ENCODE measurements at regions of chr6 and their contacts with region 1.

Region 1: DNA sequence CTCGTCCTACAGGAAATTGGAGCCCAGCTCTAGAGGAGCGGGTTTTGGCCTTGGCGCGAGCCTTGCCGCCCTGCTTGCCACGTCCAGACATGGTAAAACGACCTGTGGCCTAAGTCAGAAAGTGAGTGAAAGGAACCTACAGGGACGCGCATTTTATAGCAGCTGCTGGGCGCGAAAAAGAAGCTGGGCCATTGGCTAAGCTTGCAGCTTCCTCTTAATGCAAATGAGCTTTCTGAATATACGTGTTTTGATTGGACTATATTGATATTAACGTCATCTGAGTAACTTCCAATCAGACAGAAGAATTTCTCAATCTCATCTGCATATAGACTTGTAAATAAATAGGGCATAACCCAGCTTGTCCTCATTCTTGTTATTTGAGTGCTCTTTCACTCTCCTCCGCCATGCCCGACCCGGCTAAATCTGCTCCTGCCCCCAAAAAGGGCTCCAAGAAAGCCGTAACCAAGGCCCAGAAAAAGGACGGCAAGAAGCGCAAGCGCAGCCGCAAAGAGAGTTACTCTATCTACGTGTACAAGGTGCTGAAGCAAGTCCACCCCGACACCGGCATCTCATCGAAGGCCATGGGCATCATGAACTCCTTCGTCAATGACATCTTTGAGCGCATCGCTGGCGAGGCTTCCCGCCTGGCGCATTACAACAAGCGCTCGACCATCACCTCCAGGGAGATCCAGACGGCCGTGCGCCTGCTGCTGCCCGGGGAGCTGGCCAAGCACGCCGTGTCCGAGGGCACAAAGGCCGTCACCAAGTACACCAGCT is 18.9 kb downstream of the OR2B2 start:
- DNase-seq: peak; percentile 81
- H3K4me3 ChIP-seq: peak overlapping the region; percentile 75 to 93
- H3K27ac ChIP-seq: peak overlapping the region; percentile 84 to 98
- H3K4me1 ChIP-seq: peaks cover 11 to 21% of the 10 kb centered on the region in 2 experiments; a peak in 3 of 4 replicates
- H3K27me3 ChIP-seq: no peaks in the 10 kb centered on the region
- CTCF ChIP-seq: no peak
- EP300 ChIP-seq: 0 out of 4 replicates have a peak, but pooled peaks of 1 of the 2 experiments have one; percentile 68
- RAD21 ChIP-seq: no peak

Region 2: GRCh38 chr6:27132532-27133280 is 760.5 kb before region 1 on chr6:
- CTCF ChIA-PET with region 1: no interaction called
- POLR2A ChIA-PET with region 1: interaction called, 23 read pairs
- DNase-seq: peak; percentile 93
- H3K4me3 ChIP-seq: peak overlapping the region; percentile 72 to 73
- H3K27ac ChIP-seq: peak overlapping the region; percentile 91 to 97
- H3K4me1 ChIP-seq: peaks cover 4 to 6% of the 10 kb centered on the region in 2 experiments; a peak in 3 of 4 replicates
- H3K27me3 ChIP-seq: no peaks in the 10 kb centered on the region
- CTCF ChIP-seq: no peak
- EP300 ChIP-seq: peak in 1 of 2 experiments; percentile 43; a peak in 1 of 4 replicates
- RAD21 ChIP-seq: no peak

Region 3: GRCh38 chr6:27795697-27796494 is 97.4 kb before region 1 on chr6:
- CTCF ChIA-PET with region 1: interaction called, 21 read pairs
- POLR2A ChIA-PET with region 1: interaction called, 3 read pairs
- DNase-seq: peak; percentile 53
- H3K4me3 ChIP-seq: no peak overlapping the region; a peak in 1 of 4 replicates
- H3K27ac ChIP-seq: peak overlapping the region in 1 of 2 experiments; percentile 28; a peak in 1 of 4 replicates
- H3K4me1 ChIP-seq: peaks cover 0 to 12% of the 10 kb centered on the region in 2 experiments; a peak in 2 of 4 replicates
- H3K27me3 ChIP-seq: no peaks in the 10 kb centered on the region
- CTCF ChIP-seq: peak; percentile 81
- EP300 ChIP-seq: no peak
- RAD21 ChIP-seq: peak; percentile 68

Region 4: GRCh38 chr6:27838058-27838944 is 54.9 kb before region 1 on chr6:
- CTCF ChIA-PET with region 1: interaction called, 29 read pairs
- POLR2A ChIA-PET with region 1: interaction called, 112 read pairs
- DNase-seq: peak; percentile 84
- H3K4me3 ChIP-seq: peak overlapping the region; percentile 83 to 84
- H3K27ac ChIP-seq: peak overlapping the region; percentile 97 to 99
- H3K4me1 ChIP-seq: peaks cover 0 to 11% of the 10 kb centered on the region in 2 experiments; a peak in 2 of 4 replicates
- H3K27me3 ChIP-seq: no peaks in the 10 kb centered on the region
- CTCF ChIP-seq: no peak
- EP300 ChIP-seq: peak in 1 of 2 experiments; percentile 26; a peak in 1 of 4 replicates
- RAD21 ChIP-seq: no peak

Region 5: DNA sequence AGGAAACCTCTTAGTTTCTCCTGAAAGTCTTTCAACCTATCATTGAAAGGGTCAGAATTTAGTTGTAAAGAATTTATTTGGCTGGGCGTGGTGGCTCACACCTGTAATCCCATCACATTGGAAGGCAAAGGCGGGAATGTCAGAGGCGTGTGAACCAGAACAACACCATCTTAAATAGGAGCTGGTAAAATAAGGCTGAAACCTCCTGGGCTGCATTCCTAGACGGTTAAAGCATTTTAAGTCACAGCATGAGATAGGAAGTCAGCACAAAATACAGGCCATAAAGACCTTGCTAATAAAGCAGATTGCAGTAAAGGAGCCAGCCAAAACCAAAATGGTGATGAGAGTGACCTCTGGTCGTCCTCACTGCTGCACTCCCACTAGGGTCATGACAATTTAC is 10.6 kb before region 1 on chr6:
- CTCF ChIA-PET with region 1: no interaction called
- POLR2A ChIA-PET with region 1: interaction called, 13 read pairs
- DNase-seq: no peak
- H3K4me3 ChIP-seq: no peak overlapping the region
- H3K27ac ChIP-seq: no peak overlapping the region
- H3K4me1 ChIP-seq: no peaks in the 10 kb centered on the region; a peak in 1 of 4 replicates
- H3K27me3 ChIP-seq: no peaks in the 10 kb centered on the region
- CTCF ChIP-seq: no peak
- EP300 ChIP-seq: no peak
- RAD21 ChIP-seq: no peak

Measured in SK-N-SH (cell line).